Ascending aorta (tissue), 2 donors: ENCODE measurements at regions of chr7 and their contacts with region 1.

Region 1: DNA sequence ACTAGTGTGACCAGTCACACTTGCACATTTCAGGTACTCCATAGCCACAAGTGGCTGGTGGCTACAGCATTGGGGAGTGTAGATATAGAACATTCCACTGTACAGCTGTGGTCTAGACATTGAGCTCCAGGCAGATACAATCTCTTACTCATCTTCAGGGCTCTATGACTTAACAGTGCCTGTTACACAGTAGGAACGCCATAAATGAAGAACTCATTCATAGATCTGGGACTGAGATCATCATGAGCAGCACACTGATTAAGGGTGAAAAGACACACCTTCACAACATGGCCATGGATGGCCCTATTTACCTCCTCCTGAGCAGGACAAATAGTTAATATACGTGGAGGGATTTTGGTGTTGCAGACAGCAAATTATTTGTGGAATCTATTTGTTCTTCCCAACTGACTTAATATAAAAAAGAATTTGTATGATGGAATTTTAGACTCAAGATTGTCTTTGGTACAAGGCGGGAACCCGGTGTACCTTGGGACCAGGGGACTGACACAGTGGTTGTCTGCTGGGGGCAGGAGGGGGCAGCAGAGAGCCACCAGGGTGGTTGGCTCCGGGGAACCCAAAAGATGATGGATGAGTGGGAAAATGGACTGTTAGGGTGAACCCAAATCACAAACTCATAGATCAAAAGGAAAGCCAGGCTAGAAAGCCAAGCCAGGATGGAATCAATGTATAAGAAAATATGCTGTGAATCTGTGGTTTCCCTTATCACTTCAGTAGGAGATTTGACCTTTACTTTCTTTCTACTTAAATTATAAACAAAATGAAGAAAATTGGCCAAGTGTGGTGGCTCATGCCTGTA is 24.3 kb upstream of the CPA2 start:
- DNase-seq: no peak
- H3K4me3 ChIP-seq: no peak overlapping the region
- H3K27ac ChIP-seq: no peak overlapping the region
- H3K4me1 ChIP-seq: no peaks in the 10 kb centered on the region
- H3K27me3 ChIP-seq: no peaks in the 10 kb centered on the region
- CTCF ChIP-seq: peak; percentile 66 to 79 (median 75)

Region 2: DNA sequence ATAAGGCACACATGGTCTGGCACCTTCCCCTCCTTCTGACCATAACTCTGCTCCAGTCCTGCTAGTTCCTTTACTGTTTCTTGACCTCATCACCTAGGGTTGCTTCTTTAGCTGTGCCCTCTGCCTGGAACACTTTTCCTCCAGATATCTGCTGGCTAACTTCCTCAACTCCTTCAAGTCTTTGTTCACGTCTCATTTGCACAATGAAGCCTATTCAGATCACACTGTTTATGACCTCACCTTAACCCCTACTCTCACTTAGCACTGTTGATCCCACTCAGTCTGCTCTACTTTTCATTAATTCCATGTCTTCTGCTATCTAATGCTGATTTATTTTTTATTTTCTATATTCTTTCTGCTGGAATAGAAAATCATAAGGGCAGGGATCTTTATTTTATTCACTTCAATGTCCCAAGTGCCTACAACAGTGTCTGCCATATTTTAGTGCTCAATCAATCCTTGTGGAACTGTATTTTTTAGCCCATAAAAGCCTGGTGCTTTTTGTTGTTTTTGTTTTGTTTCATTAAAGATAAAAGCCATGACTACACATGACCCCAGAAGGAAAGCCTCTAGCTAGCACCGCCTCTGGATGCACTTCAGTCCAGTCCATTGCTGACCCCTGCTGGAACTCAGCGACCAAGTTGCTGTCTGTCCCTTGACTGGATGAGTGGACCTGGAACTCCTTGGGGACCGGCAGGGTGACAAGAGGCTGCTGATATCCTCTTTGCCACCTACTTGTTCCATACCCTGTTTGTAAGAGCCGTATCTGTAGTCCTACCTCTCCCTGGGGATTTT is 479.3 kb after region 1 on chr7:
- intact Hi-C with region 1: loop called (anchors 2 kb)
- DNase-seq: peak in 1 of 2 donors; percentile 70
- H3K4me3 ChIP-seq: no peak overlapping the region
- H3K27ac ChIP-seq: no peak overlapping the region
- H3K4me1 ChIP-seq: no peaks in the 10 kb centered on the region
- H3K27me3 ChIP-seq: no peaks in the 10 kb centered on the region
- CTCF ChIP-seq: peak; percentile 27 to 63 (median 41)

Region 3: GRCh38 chr7:130831817-130832481 is 589.5 kb after region 1 on chr7:
- intact Hi-C with region 1: loop called (anchors 5 kb)
- DNase-seq: no peak
- H3K4me3 ChIP-seq: no peak overlapping the region
- H3K27ac ChIP-seq: no peak overlapping the region
- H3K4me1 ChIP-seq: peaks cover 0 to 3% of the 10 kb centered on the region in 2 donors
- H3K27me3 ChIP-seq: no peaks in the 10 kb centered on the region
- CTCF ChIP-seq: peak; percentile 41 to 78 (median 71)